Gastrocnemius medialis (tissue), 4 donors: ENCODE measurements at regions of chr14 and their contacts with region 1.

Region 1: GRCh38 chr14:35404449-35405303 is at the start of gene NFKBIA:
- DNase-seq: peak; percentile 86 to 91
- ATAC-seq: peak; percentile 52 to 59
- H3K4me3 ChIP-seq: peak within 1 kb of the TSS; percentile 66 to 88 (median 85)
- H3K27ac ChIP-seq: peak within 1 kb of the TSS; percentile 94 to 99 (median 99)
- H3K4me1 ChIP-seq: peaks cover 31 to 38% of the 10 kb centered on the region in 2 donors
- H3K27me3 ChIP-seq: no peaks in the 10 kb centered on the region
- CTCF ChIP-seq: peak in 4 of 5 experiments; percentile 15 to 44 (median 26)
- POLR2A ChIP-seq: peak; percentile 99
- total RNA-seq, gene NFKBIA: 185 to 379 (median 320) TPM

Region 2: DNA sequence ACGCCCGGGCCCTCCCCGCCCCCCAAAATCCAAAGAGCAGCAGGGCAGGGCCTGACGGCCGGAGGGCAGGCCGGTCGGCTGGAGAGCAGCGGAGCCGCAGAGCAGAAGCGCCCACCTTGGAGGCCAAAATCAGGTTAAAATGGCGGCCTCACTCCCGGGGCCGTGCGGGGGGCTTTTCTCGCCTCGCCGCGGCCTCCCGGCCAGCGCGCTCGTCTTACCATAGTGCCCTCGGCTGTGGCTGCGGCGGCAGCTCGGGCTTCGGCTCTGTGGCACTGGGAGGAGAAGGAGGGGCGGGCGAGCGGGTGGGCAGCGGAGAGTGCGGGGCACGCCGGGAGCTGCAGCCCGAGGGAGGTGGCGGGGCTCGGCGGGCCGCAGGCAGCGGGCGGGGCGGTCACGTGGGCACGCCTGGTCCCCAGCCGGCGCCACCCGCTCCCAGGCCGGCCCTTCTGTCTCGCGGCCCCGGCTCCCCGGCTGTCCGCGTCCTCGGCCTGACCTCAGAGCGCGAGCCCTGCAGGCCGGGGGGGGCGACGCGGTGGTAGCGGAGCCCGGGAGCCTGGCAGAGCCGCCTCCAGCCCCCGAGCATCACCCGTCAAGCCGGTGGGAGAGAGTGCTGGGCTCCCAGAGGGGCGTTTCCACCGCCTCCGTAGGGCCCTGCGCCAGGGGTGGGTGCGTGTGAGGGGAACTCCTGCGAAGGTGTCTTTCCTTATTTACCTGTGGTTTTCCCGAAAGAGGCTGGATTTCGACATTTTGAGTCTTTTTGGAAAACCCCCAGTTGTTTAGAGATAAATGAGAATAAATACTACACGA is 690.2 kb before region 1 on chr14 and contains the start of gene CFL2:
- in situ Hi-C with region 1: loop called in 1 of 4 experiments (anchors 25 kb)
- intact Hi-C with region 1: loop called (anchors 2 kb)
- DNase-seq: peak; percentile 77 to 91
- ATAC-seq: peak; percentile 70 to 73
- H3K4me3 ChIP-seq: peak within 1 kb of the TSS; percentile 74 to 97 (median 94)
- H3K27ac ChIP-seq: peak within 1 kb of the TSS; percentile 96 to 100 (median 98)
- H3K4me1 ChIP-seq: peaks cover 34 to 45% of the 10 kb centered on the region in 2 donors
- H3K27me3 ChIP-seq: no peaks in the 10 kb centered on the region
- CTCF ChIP-seq: no peak
- POLR2A ChIP-seq: peak; percentile 87 to 89
- total RNA-seq, gene CFL2: 331 to 434 (median 371) TPM

Region 3: GRCh38 chr14:34982417-34983147 is 422.1 kb before region 1 on chr14 and contains the start of gene SRP54:
- in situ Hi-C with region 1: no loop called
- intact Hi-C with region 1: loop called (anchors 2 kb)
- DNase-seq: peak; percentile 98 to 99
- ATAC-seq: peak; percentile 98 to 99
- H3K4me3 ChIP-seq: peak within 1 kb of the TSS; percentile 79 to 90 (median 80)
- H3K27ac ChIP-seq: peak within 1 kb of the TSS; percentile 83 to 95 (median 93)
- H3K4me1 ChIP-seq: peaks cover 28 to 36% of the 10 kb centered on the region in 2 donors
- H3K27me3 ChIP-seq: no peaks in the 10 kb centered on the region
- CTCF ChIP-seq: peak in 1 of 5 experiments; percentile 24
- POLR2A ChIP-seq: peak; percentile 74 to 86
- total RNA-seq, gene SRP54: 33.7 to 40.0 (median 34.6) TPM

Region 4: GRCh38 chr14:35121887-35122695 is 282.6 kb before region 1 on chr14 and contains the starts of genes PPP2R3C and PRORP:
- in situ Hi-C with region 1: loop called in 1 of 4 experiments (anchors 5 kb)
- intact Hi-C with region 1: no loop called
- DNase-seq: peak; percentile 93
- ATAC-seq: peak; percentile 89 to 93
- H3K4me3 ChIP-seq: peak within 1 kb of the TSS; percentile 77 to 95 (median 87)
- H3K27ac ChIP-seq: peak within 1 kb of the TSS; percentile 94 to 98 (median 97)
- H3K4me1 ChIP-seq: peaks cover 18 to 24% of the 10 kb centered on the region in 2 donors
- H3K27me3 ChIP-seq: no peaks in the 10 kb centered on the region
- CTCF ChIP-seq: no peak
- POLR2A ChIP-seq: peak; percentile 56 to 64
- total RNA-seq, gene PPP2R3C: 27.9 to 59.4 (median 33.2) TPM
- total RNA-seq, gene PRORP: 14.8 to 21.8 (median 20.0) TPM

Region 5: DNA sequence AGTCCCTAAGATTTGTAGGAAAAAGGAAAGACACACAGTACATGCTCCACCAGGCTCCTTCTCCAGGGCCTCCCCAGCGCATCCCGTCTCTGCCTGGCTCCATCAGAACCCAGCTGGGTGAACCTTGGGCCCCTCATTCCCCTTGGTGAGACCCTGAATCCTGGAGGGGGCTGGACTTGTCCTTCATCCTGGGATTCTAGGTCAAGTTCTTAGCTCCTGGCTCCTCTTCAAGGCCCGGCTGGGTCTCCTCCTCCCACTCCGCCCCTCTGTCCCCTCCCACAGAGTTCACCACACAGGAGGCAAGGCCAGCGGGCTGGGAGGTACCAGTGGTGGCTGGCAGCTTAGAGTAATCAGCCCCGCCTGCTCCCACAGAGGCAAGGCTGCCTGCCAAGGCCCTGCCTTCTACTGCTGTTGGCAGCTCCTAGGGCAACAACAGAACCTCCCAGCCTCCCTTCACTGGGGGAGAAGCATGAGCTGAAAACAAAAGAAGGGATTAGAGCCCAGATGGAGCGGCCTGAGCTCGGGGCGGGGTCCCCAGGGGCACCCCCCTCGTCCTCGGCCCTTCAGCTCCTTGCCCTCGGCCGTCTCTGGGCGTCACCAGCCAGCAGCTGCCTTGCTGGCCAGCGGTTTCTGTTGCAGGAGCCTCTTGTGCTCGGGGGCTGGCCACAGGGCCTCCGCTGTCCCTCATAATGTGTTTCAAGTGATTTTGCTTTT is 63.1 kb before region 1 on chr14:
- in situ Hi-C with region 1: loop called in 2 of 4 experiments (anchors 5 to 10 kb)
- intact Hi-C with region 1: loop called (anchors 1 kb)
- DNase-seq: peak; percentile 93 to 98
- ATAC-seq: peak; percentile 78 to 81
- H3K4me3 ChIP-seq: peak overlapping the region; percentile 47 to 57 (median 50)
- H3K27ac ChIP-seq: peak overlapping the region; percentile 94 to 99 (median 96)
- H3K4me1 ChIP-seq: peaks cover 30 to 34% of the 10 kb centered on the region in 2 donors
- H3K27me3 ChIP-seq: no peaks in the 10 kb centered on the region
- CTCF ChIP-seq: no peak
- POLR2A ChIP-seq: peak; percentile 61 to 71

Region 6: GRCh38 chr14:35384455-35385041 is 20.1 kb before region 1 on chr14:
- in situ Hi-C with region 1: no loop called
- intact Hi-C with region 1: loop called (anchors 1 kb)
- DNase-seq: peak; percentile 77 to 92
- ATAC-seq: peak; percentile 75 to 84
- H3K4me3 ChIP-seq: peak overlapping the region; percentile 8 to 14 (median 11)
- H3K27ac ChIP-seq: peak overlapping the region; percentile 86 to 93 (median 90)
- H3K4me1 ChIP-seq: peaks cover 37 to 50% of the 10 kb centered on the region in 2 donors
- H3K27me3 ChIP-seq: no peaks in the 10 kb centered on the region
- CTCF ChIP-seq: peak in 4 of 5 experiments; percentile 50 to 59 (median 54)
- POLR2A ChIP-seq: peak; percentile 39 to 67